PC-3 (cell line): ENCODE measurements at regions of chr20 and their contacts with region 1.

Region 1: GRCh38 chr20:15842872-15843271 is 730.4 kb downstream of the KIF16B start:
- DNase-seq: peak; percentile 11
- ATAC-seq: no peak
- H3K4me3 ChIP-seq: no peak overlapping the region
- H3K27ac ChIP-seq: no peak overlapping the region
- H3K4me1 ChIP-seq: no peaks in the 10 kb centered on the region
- H3K27me3 ChIP-seq: no peaks in the 10 kb centered on the region
- CTCF ChIP-seq: peak; percentile 47

Region 2: DNA sequence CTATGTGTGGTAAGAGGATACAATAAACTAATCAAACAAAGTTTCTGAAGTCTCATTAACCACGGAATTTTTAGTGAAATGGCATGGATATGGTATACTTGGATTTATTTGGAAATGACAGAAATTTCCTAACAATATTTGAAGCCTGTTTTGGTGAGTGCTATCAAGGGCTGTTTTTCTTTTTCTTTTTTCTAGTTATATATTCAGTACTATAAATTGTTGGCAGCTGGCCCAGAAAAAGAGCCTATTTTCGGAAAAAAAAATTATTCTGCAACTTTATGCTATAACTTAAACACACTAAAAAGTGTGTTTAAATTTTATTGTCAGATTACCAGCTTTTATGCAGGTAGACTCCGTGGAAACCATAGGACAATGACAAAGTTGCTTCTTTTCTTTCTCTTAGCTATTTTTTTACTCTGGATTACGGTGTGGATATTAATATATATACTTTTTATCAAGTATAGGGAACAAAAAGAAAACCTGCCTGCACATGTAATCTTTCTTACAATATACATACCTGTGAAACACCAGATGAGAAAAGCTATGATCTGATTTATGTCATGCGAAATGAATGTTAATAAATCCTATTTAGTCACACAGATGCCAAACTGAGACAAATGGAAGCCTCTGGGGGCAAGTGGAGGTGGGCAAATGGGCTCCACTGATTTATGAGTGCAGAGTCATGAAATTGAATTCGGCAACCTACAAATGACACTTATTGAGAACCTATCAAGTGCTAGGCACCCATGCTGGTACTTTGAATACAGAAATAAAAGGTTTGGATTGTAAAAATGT is 586.0 kb before region 1 on chr20:
- CTCF ChIA-PET with region 1: no interaction called
- POLR2A ChIA-PET with region 1: interaction called, 14 read pairs
- intact Hi-C with region 1: no loop called
- DNase-seq: no peak
- ATAC-seq: no peak
- H3K4me3 ChIP-seq: no peak overlapping the region
- H3K27ac ChIP-seq: no peak overlapping the region
- H3K4me1 ChIP-seq: no peaks in the 10 kb centered on the region
- H3K27me3 ChIP-seq: no peaks in the 10 kb centered on the region
- CTCF ChIP-seq: no peak

Region 3: GRCh38 chr20:15862183-15862582 is 19.3 kb after region 1 on chr20:
- CTCF ChIA-PET with region 1: no interaction called
- POLR2A ChIA-PET with region 1: no interaction called
- intact Hi-C with region 1: loop called (anchors 1 kb)
- DNase-seq: peak; percentile 24
- ATAC-seq: peak; percentile 73
- H3K4me3 ChIP-seq: no peak overlapping the region
- H3K27ac ChIP-seq: no peak overlapping the region
- H3K4me1 ChIP-seq: no peaks in the 10 kb centered on the region
- H3K27me3 ChIP-seq: no peaks in the 10 kb centered on the region
- CTCF ChIP-seq: no peak

Region 4: DNA sequence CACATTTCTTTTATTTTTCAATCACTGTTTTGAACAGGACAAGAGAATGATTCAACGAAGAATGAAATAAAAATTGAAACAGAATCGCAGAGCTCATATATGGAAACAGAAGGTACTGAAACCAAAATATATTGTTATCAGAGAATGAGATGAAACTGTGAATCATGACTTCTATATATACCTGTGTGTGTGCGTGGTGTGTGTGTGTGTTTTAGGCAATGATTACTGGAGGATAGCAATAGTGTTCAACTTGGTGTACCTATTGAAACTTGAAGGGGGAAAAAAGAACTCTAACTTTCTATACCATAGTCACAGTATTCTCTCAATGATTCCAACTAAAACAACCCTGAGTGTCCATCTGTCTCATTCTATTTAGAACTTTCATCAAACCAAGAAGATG is 143.8 kb after region 1 on chr20:
- CTCF ChIA-PET with region 1: no interaction called
- POLR2A ChIA-PET with region 1: no interaction called
- intact Hi-C with region 1: no loop called
- DNase-seq: no peak
- ATAC-seq: no peak
- H3K4me3 ChIP-seq: no peak overlapping the region
- H3K27ac ChIP-seq: no peak overlapping the region
- H3K4me1 ChIP-seq: no peaks in the 10 kb centered on the region
- H3K27me3 ChIP-seq: no peaks in the 10 kb centered on the region
- CTCF ChIP-seq: no peak

Region 5: DNA sequence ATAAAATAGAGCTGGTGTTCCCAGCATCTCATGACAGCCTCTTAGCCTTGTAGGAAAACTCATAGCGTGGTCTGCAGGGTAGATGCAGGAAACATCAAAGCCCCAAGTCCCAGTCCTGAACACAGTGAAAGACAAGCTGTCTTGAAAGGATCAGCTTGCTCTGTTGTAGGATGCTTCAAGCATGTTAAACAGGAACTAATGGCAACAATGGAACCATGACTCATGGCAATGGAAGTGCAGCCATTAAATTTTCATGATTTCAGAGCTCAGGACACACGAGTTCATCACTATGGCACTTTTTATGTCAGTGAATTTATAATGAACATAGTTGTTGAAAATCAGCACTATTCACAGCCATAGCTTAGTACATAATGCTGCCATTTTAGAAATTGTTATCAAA is 362.6 kb after region 1 on chr20:
- CTCF ChIA-PET with region 1: no interaction called
- POLR2A ChIA-PET with region 1: interaction called, 10 read pairs
- intact Hi-C with region 1: no loop called
- DNase-seq: peak; percentile 76
- ATAC-seq: peak; percentile 85
- H3K4me3 ChIP-seq: no peak overlapping the region
- H3K27ac ChIP-seq: no peak overlapping the region
- H3K4me1 ChIP-seq: peaks cover 4% of the 10 kb centered on the region; the same call in 1 of the 2 replicates
- H3K27me3 ChIP-seq: no peaks in the 10 kb centered on the region
- CTCF ChIP-seq: no peak